Activated CD8-positive, alpha-beta T cell treated with anti-CD3 and anti-CD28 coated beads for 36 hours (primary cell): ENCODE measurements at regions of chr19 and their contacts with region 1.

Region 1: DNA sequence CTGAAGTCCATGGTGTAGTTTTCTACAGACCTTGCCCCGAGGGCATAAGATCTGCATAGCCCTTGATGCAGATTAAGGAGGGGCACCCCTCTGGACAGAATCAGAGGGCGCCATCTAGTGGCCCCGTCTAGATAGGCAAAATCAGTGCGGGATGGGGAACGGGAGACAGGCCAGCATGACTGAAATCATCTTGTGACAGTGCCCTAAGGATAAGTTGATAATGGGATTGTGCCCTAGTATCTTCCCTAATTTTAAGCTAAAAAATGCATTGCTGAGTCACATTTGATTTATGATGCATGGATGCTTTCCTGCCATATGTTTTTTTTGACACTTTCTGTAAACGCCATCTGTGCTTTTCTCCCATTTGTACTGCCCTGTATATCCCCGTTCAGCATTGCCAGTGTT is 19.0 kb upstream of the GPI start:
- DNase-seq: peak; percentile 86
- ATAC-seq: peak; percentile 34
- H3K4me3 Mint-ChIP-seq: no peak overlapping the region
- H3K27ac Mint-ChIP-seq: no peak overlapping the region
- H3K4me1 Mint-ChIP-seq: peaks cover 20% of the 10 kb centered on the region
- H3K27me3 Mint-ChIP-seq: no peaks in the 10 kb centered on the region
- CTCF ChIP-seq: peak; percentile 88

Region 2: GRCh38 chr19:34209726-34210125 is 136.2 kb before region 1 on chr19:
- CTCF ChIA-PET with region 1: interaction called, 11 read pairs
- POLR2A ChIA-PET with region 1: no interaction called
- intact Hi-C with region 1: no loop called
- DNase-seq: no peak
- ATAC-seq: no peak
- H3K4me3 Mint-ChIP-seq: no peak overlapping the region
- H3K27ac Mint-ChIP-seq: no peak overlapping the region
- H3K4me1 Mint-ChIP-seq: no peaks in the 10 kb centered on the region
- H3K27me3 Mint-ChIP-seq: no peaks in the 10 kb centered on the region
- CTCF ChIP-seq: no peak

Region 3: DNA sequence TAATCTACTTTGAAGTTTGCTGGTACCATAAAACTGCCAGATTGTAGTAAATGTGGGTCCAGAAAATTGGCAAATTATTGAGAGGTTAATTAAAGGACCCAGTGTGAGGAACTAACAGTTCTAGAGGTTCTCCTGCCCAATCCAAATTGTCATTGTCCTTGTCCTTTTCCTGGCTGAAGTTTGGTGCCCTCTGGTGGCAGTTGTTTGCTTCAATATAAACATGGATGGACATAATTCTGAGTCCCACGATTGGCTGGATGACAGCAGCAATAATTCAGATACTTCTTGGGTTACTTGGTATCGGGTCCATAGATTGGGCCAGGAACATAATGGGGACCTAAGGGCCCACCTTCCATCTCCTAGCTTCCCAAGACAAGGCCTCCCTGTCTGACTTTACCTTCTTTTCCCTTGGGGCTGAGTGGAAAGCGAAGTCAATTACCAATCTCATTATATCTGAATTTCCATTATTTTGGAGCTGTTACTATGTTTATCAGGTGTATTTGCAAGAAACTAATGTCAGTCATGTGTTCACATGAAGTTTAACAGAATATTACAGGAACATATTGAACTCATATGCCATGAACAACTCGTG is 125.4 kb before region 1 on chr19:
- CTCF ChIA-PET with region 1: interaction called, 9 read pairs
- POLR2A ChIA-PET with region 1: no interaction called
- intact Hi-C with region 1: loop called (anchors 10 kb)
- DNase-seq: peak; percentile 82
- ATAC-seq: no peak
- H3K4me3 Mint-ChIP-seq: no peak overlapping the region
- H3K27ac Mint-ChIP-seq: peak overlapping the region; percentile 45
- H3K4me1 Mint-ChIP-seq: peaks cover 49% of the 10 kb centered on the region
- H3K27me3 Mint-ChIP-seq: no peaks in the 10 kb centered on the region
- CTCF ChIP-seq: peak; percentile 76

Region 4: DNA sequence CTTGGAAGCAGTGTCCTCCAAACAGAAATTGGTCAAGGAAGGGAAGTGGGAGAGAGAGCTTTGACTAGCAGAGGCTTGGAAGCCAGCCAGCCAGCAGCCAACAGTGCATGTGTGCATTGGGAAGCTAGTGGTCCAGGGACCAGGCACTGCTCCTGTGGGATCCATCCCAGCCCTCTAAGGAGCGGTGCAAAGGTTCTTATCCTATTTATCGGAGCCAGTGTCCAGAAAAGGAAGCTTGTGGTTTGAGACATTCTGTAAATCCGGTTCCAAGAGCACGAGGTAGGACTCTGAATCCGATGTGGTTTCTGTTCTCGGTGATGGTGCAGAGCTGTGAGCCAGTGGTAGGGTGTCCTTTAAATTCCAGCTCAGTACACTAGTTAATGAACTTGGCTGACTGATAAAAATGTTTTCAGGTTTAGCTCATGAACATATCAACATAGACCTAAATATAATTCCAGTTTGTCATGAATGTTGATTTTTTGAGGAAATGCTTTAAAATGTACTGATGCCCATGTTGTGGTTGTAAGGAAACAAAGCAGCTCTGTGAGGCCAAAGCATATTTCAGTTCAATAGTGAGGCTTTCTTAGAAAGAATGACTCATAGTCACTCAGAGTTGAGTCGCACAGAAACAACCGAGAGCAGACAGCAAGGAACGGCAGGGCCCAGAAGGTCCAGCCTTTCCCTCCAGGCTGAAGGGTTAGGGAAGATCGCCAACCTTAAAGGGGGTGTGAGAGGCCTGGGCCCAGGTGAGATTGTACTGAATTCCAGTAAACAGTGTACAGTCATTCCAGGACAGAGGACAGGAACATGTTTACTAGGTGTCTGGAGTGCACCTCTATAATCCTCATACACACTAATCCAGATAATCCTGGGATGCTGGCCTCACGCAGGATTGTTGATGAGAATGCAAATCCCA is 113.1 kb before region 1 on chr19:
- CTCF ChIA-PET with region 1: interaction called, 13 read pairs
- POLR2A ChIA-PET with region 1: interaction called, 3 read pairs
- intact Hi-C with region 1: loop called (anchors 10 kb)
- DNase-seq: peak; percentile 44
- ATAC-seq: peak; percentile 89
- H3K4me3 Mint-ChIP-seq: peak overlapping the region; percentile 14
- H3K27ac Mint-ChIP-seq: peak overlapping the region; percentile 79
- H3K4me1 Mint-ChIP-seq: peaks cover 20% of the 10 kb centered on the region
- H3K27me3 Mint-ChIP-seq: no peaks in the 10 kb centered on the region
- CTCF ChIP-seq: no peak

Region 5: DNA sequence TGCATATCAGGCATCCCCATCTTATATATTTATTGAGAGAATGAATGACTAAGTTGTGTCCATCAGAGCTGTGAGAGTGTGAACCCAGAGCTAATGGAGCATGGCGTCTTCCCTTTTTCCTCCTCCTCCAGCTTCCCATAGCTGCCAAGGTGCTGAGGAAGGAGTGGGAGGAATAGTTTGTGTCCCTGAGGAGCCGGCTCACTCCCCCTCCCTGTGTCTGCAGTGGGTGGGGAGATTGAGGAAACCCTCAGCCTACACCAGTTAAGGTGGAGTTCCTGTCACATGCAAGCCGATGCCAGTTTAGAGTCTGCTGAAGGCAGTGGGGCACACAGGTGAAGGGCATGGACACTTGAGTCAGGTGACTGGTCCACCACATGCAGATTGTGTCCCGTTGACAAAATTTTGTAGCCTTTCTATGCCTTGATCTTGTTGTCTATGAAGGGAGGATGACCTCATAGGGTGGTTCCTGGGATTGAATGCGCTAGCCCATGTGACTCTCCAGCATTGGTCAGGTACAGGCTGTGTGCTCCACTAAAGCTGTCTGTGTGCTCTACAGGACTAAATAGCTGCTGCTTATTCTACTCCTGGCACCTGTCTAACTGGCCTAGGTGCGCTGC is 28.5 kb before region 1 on chr19:
- CTCF ChIA-PET with region 1: interaction called, 26 read pairs
- POLR2A ChIA-PET with region 1: no interaction called
- intact Hi-C with region 1: no loop called
- DNase-seq: peak; percentile 30
- ATAC-seq: peak; percentile 87
- H3K4me3 Mint-ChIP-seq: no peak overlapping the region
- H3K27ac Mint-ChIP-seq: peak overlapping the region; percentile 1
- H3K4me1 Mint-ChIP-seq: peaks cover 21% of the 10 kb centered on the region
- H3K27me3 Mint-ChIP-seq: no peaks in the 10 kb centered on the region
- CTCF ChIP-seq: no peak

Region 6: DNA sequence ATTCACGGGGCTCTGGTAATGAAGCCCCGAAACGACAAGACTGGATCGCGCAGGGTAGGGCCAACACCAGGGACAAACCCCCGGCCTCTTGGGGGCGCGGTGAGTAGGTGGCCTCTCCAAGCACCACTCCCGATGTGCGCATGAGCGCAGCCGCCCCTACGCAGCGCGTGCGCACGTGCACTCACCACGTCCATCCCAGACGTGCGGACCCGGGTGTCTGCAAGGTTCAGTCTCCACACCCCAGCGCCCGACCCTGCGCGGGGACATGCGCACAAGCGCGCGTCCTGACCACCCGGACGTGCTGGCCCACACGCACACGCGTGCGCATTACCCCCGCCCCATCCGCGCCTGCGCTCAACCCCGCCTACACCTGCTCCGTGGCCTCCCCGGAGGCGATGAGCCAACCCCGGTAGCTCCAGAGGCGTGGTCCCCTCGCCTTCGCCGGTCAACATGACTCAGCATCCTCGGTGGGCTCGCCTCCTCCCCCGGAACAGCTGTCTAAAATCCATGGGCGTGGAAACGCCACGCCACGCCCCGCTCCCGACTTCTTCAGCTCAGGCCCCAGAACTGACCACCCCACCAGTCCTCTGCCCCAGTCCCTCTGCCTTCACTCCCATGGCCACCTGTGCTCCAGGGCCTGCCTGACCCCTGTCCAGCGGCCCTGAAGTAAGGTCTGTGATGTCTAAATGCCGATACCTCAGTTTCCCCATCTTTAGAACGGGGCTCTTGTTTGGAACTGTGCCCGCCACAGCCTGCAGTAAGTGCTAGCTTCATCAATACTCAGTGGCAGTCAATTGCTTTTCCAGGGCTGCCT is 13.4 kb after region 1 on chr19:
- CTCF ChIA-PET with region 1: interaction called, 28 read pairs
- POLR2A ChIA-PET with region 1: interaction called, 5 read pairs
- intact Hi-C with region 1: no loop called
- DNase-seq: peak; percentile 99
- ATAC-seq: peak; percentile 93
- H3K4me3 Mint-ChIP-seq: peak overlapping the region; percentile 78
- H3K27ac Mint-ChIP-seq: peak overlapping the region; percentile 97
- H3K4me1 Mint-ChIP-seq: peaks cover 49% of the 10 kb centered on the region
- H3K27me3 Mint-ChIP-seq: no peaks in the 10 kb centered on the region
- CTCF ChIP-seq: peak; percentile 48

Region 7: GRCh38 chr19:34364830-34365462 is 19.0 kb after region 1 on chr19 and contains the start of gene GPI:
- CTCF ChIA-PET with region 1: interaction called, 15 read pairs
- POLR2A ChIA-PET with region 1: interaction called, 5 read pairs
- intact Hi-C with region 1: no loop called
- DNase-seq: peak; percentile 77
- ATAC-seq: peak; percentile 88
- H3K4me3 Mint-ChIP-seq: peak within 1 kb of the TSS; percentile 100
- H3K27ac Mint-ChIP-seq: peak within 1 kb of the TSS; percentile 93
- H3K4me1 Mint-ChIP-seq: peaks cover 57% of the 10 kb centered on the region
- H3K27me3 Mint-ChIP-seq: no peaks in the 10 kb centered on the region
- CTCF ChIP-seq: no peak
- total RNA-seq, gene GPI: 847 to 870 TPM

Region 8: GRCh38 chr19:34375598-34375997 is 29.6 kb after region 1 on chr19:
- CTCF ChIA-PET with region 1: no interaction called
- POLR2A ChIA-PET with region 1: no interaction called
- intact Hi-C with region 1: no loop called
- DNase-seq: no peak
- ATAC-seq: peak; percentile 58
- H3K4me3 Mint-ChIP-seq: no peak overlapping the region
- H3K27ac Mint-ChIP-seq: peak overlapping the region; percentile 43
- H3K4me1 Mint-ChIP-seq: peaks cover 23% of the 10 kb centered on the region
- H3K27me3 Mint-ChIP-seq: no peaks in the 10 kb centered on the region
- CTCF ChIP-seq: no peak

Region 9: GRCh38 chr19:34404109-34404897 is 58.4 kb after region 1 on chr19 and contains the start of gene PDCD2L:
- CTCF ChIA-PET with region 1: no interaction called
- POLR2A ChIA-PET with region 1: no interaction called
- intact Hi-C with region 1: no loop called
- DNase-seq: peak; percentile 98
- ATAC-seq: peak; percentile 95
- H3K4me3 Mint-ChIP-seq: peak within 1 kb of the TSS; percentile 87
- H3K27ac Mint-ChIP-seq: peak within 1 kb of the TSS; percentile 88
- H3K4me1 Mint-ChIP-seq: peaks cover 15% of the 10 kb centered on the region
- H3K27me3 Mint-ChIP-seq: no peaks in the 10 kb centered on the region
- CTCF ChIP-seq: no peak
- total RNA-seq, gene PDCD2L: 39.9 to 42.1 TPM

Region 10: GRCh38 chr19:34436716-34437115 is 90.8 kb after region 1 on chr19:
- CTCF ChIA-PET with region 1: no interaction called
- POLR2A ChIA-PET with region 1: no interaction called
- intact Hi-C with region 1: no loop called
- DNase-seq: no peak
- ATAC-seq: no peak
- H3K4me3 Mint-ChIP-seq: no peak overlapping the region
- H3K27ac Mint-ChIP-seq: no peak overlapping the region
- H3K4me1 Mint-ChIP-seq: peaks cover 10% of the 10 kb centered on the region
- H3K27me3 Mint-ChIP-seq: no peaks in the 10 kb centered on the region
- CTCF ChIP-seq: no peak